MCF 10A (cell line): ENCODE measurements at regions of chr1 and their contacts with region 1.

Region 1: DNA sequence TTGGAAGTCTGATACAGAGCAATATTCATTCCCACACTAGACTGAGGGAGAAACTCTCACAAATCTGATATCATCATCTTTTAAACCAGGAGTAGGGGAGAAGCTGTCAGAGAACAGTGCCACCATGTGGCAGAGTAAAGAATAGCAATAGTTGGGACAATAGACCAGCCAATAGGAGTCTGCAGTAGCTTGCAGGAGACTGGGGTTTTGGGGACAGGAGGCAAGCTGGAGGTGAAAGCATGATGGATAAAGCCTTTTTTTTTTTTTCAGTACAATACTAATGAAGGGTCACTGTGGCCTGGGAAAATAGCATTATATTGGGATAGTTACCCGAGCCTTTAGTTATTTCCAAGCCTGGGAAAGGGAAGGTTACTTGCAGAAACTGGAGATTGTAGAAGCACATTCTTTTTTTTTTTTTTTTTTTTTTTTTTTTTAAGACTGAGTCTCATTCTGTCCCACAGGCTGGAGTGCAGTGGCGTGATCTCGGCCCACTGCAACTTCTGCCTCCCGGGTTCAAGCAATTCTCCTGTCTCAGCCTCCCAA is 120.7 kb downstream of the S1PR1 start:
- DNase-seq: peak; percentile 85
- H3K4me3 Mint-ChIP-seq: no peak overlapping the region
- H3K27ac Mint-ChIP-seq: no peak overlapping the region
- H3K4me1 Mint-ChIP-seq: no peaks in the 10 kb centered on the region
- H3K27me3 Mint-ChIP-seq: peaks cover 58% of the 10 kb centered on the region
- CTCF ChIP-seq: peak; percentile 71

Region 2: DNA sequence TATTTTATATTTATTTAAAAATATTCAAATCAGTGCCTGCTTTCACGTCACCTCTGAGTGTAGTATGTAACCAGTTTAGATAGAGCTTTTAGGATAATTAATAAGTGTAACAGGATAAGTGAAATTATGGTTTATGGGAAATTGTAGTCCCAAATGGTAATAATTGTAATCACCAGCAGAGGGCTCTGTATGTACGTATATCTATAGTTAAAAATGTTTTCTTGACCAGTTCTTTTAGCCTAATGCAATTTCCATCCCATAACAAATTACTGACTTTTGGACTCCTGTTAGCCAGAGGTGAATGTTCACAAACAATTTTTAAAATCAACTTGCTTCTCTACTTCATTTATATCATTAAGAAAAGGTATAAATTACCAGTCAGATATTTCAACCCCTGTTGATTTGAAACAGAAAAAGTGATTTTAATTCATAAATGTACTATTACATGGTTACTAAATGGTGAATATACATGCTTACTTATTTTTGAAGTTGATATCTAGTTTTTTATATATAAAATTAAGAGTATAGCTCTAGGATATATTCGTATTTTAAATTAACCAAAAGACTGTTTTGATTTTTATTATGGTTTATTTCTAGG is 436.3 kb before region 1 on chr1:
- CTCF ChIA-PET with region 1: interaction called, 3 read pairs
- POLR2A ChIA-PET with region 1: no interaction called
- intact Hi-C with region 1: loop called (anchors 1 kb)
- DNase-seq: peak; percentile 66
- H3K4me3 Mint-ChIP-seq: no peak overlapping the region
- H3K27ac Mint-ChIP-seq: no peak overlapping the region
- H3K4me1 Mint-ChIP-seq: no peaks in the 10 kb centered on the region
- H3K27me3 Mint-ChIP-seq: no peaks in the 10 kb centered on the region
- CTCF ChIP-seq: peak; percentile 53

Region 3: GRCh38 chr1:101302831-101303511 is 54.5 kb before region 1 on chr1:
- CTCF ChIA-PET with region 1: interaction called, 32 read pairs
- POLR2A ChIA-PET with region 1: no interaction called
- intact Hi-C with region 1: no loop called
- DNase-seq: no peak
- H3K4me3 Mint-ChIP-seq: no peak overlapping the region
- H3K27ac Mint-ChIP-seq: no peak overlapping the region
- H3K4me1 Mint-ChIP-seq: no peaks in the 10 kb centered on the region
- H3K27me3 Mint-ChIP-seq: peaks cover 86% of the 10 kb centered on the region
- CTCF ChIP-seq: no peak

Region 4: DNA sequence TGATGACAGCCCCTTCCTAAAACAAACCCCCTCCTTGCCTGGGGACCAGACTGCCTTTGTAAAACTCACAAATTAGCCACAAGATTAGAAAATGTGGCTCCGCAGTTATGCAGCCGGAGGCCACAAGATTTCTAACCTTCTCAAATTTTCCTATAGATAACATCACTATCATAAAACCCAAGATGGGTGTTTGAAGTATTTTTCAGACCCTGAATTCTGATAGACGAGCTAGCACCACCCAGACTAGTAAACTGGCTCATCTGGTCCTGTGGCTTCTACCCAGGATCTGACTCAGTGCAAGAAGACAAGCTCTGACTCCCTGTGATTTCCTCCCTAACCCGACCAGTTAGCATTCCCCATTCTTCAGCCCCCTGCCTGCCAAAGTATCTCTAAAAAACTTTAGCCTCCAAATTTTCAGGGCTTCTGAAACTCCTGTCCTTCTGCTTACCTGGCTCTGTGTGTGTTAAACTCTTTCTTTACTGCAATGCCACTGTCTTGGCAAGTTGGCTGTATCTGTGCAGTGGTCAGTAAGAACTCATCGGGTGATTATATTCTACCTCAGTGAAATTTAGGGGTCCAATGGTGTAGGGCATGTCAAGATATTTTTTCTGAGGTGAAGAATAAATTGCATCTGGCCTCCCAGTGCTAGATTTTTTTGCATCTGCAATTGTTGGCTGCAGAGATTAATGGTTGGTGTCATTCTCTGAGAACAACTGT is 18.6 kb before region 1 on chr1:
- CTCF ChIA-PET with region 1: interaction called, 14 read pairs
- POLR2A ChIA-PET with region 1: no interaction called
- intact Hi-C with region 1: no loop called
- DNase-seq: no peak
- H3K4me3 Mint-ChIP-seq: no peak overlapping the region
- H3K27ac Mint-ChIP-seq: no peak overlapping the region
- H3K4me1 Mint-ChIP-seq: no peaks in the 10 kb centered on the region
- H3K27me3 Mint-ChIP-seq: peaks cover 55% of the 10 kb centered on the region
- CTCF ChIP-seq: no peak

Region 5: GRCh38 chr1:101371259-101371658 is 13.7 kb after region 1 on chr1:
- CTCF ChIA-PET with region 1: interaction called, 20 read pairs
- POLR2A ChIA-PET with region 1: no interaction called
- intact Hi-C with region 1: no loop called
- DNase-seq: peak; percentile 84
- H3K4me3 Mint-ChIP-seq: no peak overlapping the region
- H3K27ac Mint-ChIP-seq: no peak overlapping the region
- H3K4me1 Mint-ChIP-seq: peaks cover 9% of the 10 kb centered on the region
- H3K27me3 Mint-ChIP-seq: no peaks in the 10 kb centered on the region
- CTCF ChIP-seq: no peak

Region 6: DNA sequence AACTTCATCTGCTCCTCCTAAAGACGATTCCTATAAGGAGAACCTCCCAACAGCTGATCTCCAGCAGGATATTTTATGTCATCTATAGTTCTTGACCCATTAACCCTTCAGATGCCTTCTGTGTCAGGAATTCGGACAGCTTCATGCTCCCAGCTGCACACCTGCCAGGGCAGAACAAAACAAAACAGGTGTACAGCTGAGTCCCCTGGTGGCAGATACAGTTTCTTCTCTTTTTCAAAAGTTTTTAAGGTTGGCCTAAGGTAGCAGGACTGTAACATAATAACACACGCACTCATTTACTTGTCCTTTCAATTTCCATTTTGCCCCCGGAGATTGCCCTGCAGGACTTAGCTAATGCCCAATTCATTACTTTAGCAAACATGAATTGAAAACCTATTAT is 97.7 kb after region 1 on chr1:
- CTCF ChIA-PET with region 1: no interaction called
- POLR2A ChIA-PET with region 1: no interaction called
- intact Hi-C with region 1: no loop called
- DNase-seq: no peak
- H3K4me3 Mint-ChIP-seq: no peak overlapping the region
- H3K27ac Mint-ChIP-seq: no peak overlapping the region
- H3K4me1 Mint-ChIP-seq: no peaks in the 10 kb centered on the region
- H3K27me3 Mint-ChIP-seq: no peaks in the 10 kb centered on the region
- CTCF ChIP-seq: no peak